HEK293 (cell line): ENCODE measurements at regions of chr4 and their contacts with region 1.

Region 1: GRCh38 chr4:21790438-21791029 is 158.0 kb downstream of the KCNIP4 start:
- H3K4me3 ChIP-seq: no peak overlapping the region
- H3K27ac ChIP-seq: no peak overlapping the region
- H3K4me1 ChIP-seq: no peaks in the 10 kb centered on the region
- CTCF ChIP-seq: no peak

Region 2: GRCh38 chr4:21628916-21629610 is 161.5 kb before region 1 on chr4:
- CTCF ChIA-PET with region 1: no interaction called
- POLR2A ChIA-PET with region 1: no interaction called
- H3K4me3 ChIP-seq: no peak overlapping the region
- H3K27ac ChIP-seq: no peak overlapping the region
- H3K4me1 ChIP-seq: no peaks in the 10 kb centered on the region
- CTCF ChIP-seq: no peak

Region 3: DNA sequence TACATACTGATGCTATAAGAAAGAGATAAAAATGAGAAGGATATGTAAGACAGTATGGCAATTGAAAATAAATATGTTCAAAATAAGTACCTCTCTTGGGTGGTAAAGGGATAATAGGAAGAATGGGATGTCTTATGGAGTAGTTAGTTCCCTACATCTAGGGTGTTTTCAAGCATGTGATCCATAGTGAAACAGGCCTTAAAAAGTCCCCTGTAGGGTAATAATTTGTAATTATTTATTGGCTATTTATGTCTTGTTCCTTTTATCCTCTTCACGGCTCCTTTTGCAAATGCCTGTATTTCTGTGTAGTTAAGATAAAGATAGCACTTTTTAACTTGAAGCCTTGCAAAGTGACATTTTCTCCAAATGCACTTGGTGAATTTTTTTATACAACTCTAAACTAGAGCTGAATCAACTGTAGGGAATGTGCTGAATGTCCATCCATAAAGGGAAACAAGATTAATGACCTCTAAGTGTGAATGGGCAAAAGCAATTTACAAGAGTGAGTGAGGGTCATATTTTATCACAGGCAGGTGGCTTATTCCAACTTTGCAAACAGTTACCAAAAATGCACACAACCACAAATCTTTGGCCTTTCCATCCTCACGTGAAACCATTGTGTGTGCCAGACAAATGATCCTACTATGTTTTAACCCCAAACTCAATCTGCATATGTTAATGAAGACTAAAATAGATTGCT is 141.0 kb before region 1 on chr4:
- CTCF ChIA-PET with region 1: no interaction called
- POLR2A ChIA-PET with region 1: no interaction called
- H3K4me3 ChIP-seq: no peak overlapping the region
- H3K27ac ChIP-seq: no peak overlapping the region
- H3K4me1 ChIP-seq: no peaks in the 10 kb centered on the region
- CTCF ChIP-seq: no peak

Region 4: DNA sequence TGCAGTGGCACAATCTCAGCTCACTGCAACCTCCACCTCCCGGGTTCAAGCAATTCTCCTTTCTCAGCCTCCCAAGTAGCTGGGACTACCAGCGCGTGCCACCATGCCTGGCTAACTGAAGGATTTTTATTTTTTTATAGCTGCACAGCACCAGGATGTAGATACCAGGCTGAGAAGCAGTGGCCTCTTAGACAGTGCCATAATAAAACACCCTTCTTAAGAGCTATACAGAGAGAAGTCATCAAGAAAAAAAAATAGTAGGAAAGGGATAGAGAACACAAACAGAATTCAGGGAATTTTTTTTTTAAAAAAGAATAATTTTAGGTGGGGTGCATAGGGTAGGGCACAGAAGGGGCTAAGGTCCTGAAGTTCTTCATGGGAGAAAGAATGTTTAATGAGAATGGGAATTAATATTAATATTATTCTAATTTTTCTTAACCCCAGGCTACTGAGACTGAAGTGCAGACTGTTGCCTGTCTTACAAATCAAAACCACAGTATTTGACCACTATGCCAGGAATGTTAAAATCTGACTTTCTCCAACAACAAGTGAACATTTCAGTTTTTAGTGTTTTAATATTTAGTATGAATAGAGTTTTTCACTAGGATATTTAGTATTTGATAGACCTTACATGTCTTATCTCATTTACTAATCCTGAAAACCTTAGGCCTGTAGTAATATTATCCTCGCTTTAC is 11.3 kb after region 1 on chr4:
- CTCF ChIA-PET with region 1: interaction called, 29 read pairs
- POLR2A ChIA-PET with region 1: no interaction called
- H3K4me3 ChIP-seq: no peak overlapping the region
- H3K27ac ChIP-seq: no peak overlapping the region
- H3K4me1 ChIP-seq: no peaks in the 10 kb centered on the region
- CTCF ChIP-seq: no peak

Region 5: DNA sequence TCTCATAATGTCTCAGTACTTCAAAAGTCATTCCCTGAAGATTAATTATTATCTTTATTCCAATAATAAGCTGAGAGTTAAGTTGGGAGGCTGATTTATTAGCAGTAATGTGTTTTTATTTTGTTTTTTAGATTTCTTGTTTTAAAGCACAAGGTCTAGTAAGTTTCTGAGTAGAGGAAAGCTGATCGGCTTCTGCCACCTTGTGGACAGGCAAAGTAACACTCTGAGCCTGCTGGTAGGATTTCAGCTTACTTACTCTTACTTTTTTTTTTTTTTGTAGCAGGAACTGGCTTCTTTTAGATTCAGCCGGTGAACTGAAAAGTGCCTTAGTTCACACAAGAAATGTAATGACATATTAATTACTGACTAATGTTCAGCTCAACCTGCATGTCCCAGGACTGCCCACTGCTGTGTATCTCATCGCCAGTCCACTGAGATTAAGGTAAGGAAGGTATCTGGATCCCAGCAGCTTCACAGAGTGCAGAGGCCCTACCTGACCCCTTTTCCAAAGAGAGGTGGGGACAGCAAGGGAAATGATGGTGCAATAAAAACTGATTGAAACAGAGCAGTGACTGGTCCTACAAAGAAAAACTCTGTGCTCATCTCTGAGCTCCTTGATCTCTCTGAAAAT is 598.8 kb after region 1 on chr4:
- CTCF ChIA-PET with region 1: interaction called, 73 read pairs
- POLR2A ChIA-PET with region 1: no interaction called
- H3K4me3 ChIP-seq: no peak overlapping the region
- H3K27ac ChIP-seq: no peak overlapping the region
- H3K4me1 ChIP-seq: no peaks in the 10 kb centered on the region
- CTCF ChIP-seq: 0 out of 2 replicates have a peak, but pooled peaks have one; percentile 22